Activated T-helper 2 cell treated with anti-CD3 and anti-CD28 coated beads, Interferon-gamma antibody, Interleukin-2, Interleukin-4, amounts not matched to agents 10 μg/mL and 5 μg/mL and 100 μg/mL, durations not matched to agents 14 hours and 24 hours and 36 hours (primary cell): ENCODE measurements at regions of chr6 and their contacts with region 1.

Region 1: GRCh38 chr6:28586962-28587745 is 61.5 kb downstream of the GPX5 start:
- DNase-seq: peak; percentile 38
- H3K4me3 Mint-ChIP-seq: peak overlapping the region; percentile 78
- H3K27ac Mint-ChIP-seq: no peak overlapping the region
- H3K4me1 Mint-ChIP-seq: peaks cover 27% of the 10 kb centered on the region
- H3K27me3 Mint-ChIP-seq: peaks cover 66% of the 10 kb centered on the region

Region 2: GRCh38 chr6:27495386-27496135 is 1091.6 kb before region 1 on chr6:
- intact Hi-C with region 1: loop called (anchors 5 kb)
- DNase-seq: peak; percentile 49
- H3K4me3 Mint-ChIP-seq: peak overlapping the region; percentile 83
- H3K27ac Mint-ChIP-seq: peak overlapping the region; percentile 36
- H3K4me1 Mint-ChIP-seq: peaks cover 10% of the 10 kb centered on the region
- H3K27me3 Mint-ChIP-seq: peaks cover 59% of the 10 kb centered on the region

Region 3: DNA sequence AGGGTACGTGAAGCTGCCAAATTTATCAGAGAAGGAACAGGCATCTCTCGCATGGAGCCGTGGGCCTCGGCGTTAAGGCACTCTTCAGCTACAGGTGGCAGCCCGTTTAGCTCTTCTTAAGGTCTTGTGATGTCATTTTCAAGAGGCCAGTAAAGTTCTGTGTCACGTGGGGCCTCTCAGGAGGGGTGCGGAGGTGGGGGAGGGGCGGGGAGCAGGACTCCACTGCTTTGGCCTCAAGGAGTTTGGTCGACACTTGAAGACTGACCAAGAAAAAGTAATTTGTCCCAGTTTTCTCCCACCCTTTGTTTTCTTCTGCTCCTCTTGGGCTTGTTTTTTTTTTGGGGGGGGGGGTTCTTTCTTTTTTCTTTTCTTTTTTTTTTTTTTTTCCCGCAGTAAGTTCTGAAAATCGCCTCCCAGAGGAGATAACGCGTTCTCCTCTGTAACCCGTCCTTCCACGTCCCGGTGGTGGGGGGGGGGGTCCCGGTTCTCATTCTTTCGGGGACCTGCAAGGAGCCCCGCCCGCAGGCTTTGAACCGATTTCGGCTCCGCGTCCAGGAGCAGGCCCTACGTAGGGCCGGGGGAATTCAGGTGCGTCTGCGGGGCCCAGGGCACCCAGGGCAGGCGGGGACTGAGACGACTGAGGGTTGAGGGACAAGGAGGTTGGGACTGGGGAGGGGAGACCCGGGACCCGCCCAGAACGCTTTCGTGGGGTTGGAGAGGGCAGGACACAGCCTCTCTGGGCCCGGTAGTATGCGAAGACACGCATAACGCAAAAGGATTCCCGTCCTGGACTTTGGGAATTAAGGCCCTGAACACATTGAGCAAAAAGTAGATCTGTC is 97.6 kb before region 1 on chr6:
- intact Hi-C with region 1: loop called (anchors 5 kb)
- DNase-seq: peak; percentile 17
- H3K4me3 Mint-ChIP-seq: peak overlapping the region; percentile 74
- H3K27ac Mint-ChIP-seq: peak overlapping the region; percentile 6
- H3K4me1 Mint-ChIP-seq: peaks cover 18% of the 10 kb centered on the region
- H3K27me3 Mint-ChIP-seq: peaks cover 49% of the 10 kb centered on the region

Region 4: GRCh38 chr6:28542440-28543296 is 44.5 kb before region 1 on chr6:
- intact Hi-C with region 1: loop called (anchors 5 kb)
- DNase-seq: peak; percentile 46
- H3K4me3 Mint-ChIP-seq: peak overlapping the region; percentile 72
- H3K27ac Mint-ChIP-seq: no peak overlapping the region
- H3K4me1 Mint-ChIP-seq: peaks cover 23% of the 10 kb centered on the region
- H3K27me3 Mint-ChIP-seq: peaks cover 71% of the 10 kb centered on the region

Region 5: GRCh38 chr6:28553986-28554881 is 32.9 kb before region 1 on chr6:
- intact Hi-C with region 1: no loop called
- DNase-seq: no peak
- H3K4me3 Mint-ChIP-seq: no peak overlapping the region
- H3K27ac Mint-ChIP-seq: no peak overlapping the region
- H3K4me1 Mint-ChIP-seq: peaks cover 6% of the 10 kb centered on the region
- H3K27me3 Mint-ChIP-seq: peaks cover 65% of the 10 kb centered on the region

Region 6: DNA sequence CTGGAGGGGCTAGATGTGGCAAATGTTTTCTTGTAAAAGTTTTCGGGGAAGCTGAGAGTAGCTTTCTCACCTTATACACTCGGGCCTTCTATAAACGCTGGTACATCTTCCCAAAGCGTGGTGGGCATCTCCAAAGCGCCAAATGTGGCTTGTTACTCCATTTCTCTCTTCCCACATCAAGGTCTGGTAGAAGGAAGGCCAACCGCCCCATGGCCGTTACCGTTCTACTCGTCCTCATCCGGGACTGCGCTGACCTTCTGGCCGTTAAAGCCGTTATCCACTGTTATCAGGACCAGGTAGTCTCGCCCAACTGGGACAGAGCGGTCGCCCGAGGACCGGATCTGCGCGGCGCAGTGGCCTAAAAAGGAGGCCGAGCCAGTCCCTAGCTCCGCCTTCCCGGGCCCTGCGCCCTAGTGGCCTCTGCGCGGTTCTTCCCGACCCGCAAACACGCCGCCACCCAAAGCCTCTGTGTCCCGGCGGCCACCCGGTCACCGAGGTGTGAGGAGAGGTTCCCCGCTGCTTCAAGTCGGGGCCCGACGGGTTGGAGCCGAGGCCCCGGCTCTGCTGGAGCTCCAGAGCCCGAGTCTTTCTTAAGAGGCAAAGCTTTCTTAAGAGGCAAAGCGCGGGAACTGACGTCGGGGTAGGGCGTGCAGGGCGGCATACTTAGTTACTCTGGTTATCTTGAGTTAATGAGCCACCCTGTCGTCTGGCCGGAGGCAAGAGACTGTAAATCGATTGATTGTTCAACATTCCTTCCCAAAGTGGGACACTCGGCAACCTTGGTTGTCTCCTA is 29.0 kb after region 1 on chr6:
- intact Hi-C with region 1: no loop called
- DNase-seq: no peak
- H3K4me3 Mint-ChIP-seq: no peak overlapping the region
- H3K27ac Mint-ChIP-seq: no peak overlapping the region
- H3K4me1 Mint-ChIP-seq: no peaks in the 10 kb centered on the region
- H3K27me3 Mint-ChIP-seq: peaks cover 45% of the 10 kb centered on the region

Region 7: DNA sequence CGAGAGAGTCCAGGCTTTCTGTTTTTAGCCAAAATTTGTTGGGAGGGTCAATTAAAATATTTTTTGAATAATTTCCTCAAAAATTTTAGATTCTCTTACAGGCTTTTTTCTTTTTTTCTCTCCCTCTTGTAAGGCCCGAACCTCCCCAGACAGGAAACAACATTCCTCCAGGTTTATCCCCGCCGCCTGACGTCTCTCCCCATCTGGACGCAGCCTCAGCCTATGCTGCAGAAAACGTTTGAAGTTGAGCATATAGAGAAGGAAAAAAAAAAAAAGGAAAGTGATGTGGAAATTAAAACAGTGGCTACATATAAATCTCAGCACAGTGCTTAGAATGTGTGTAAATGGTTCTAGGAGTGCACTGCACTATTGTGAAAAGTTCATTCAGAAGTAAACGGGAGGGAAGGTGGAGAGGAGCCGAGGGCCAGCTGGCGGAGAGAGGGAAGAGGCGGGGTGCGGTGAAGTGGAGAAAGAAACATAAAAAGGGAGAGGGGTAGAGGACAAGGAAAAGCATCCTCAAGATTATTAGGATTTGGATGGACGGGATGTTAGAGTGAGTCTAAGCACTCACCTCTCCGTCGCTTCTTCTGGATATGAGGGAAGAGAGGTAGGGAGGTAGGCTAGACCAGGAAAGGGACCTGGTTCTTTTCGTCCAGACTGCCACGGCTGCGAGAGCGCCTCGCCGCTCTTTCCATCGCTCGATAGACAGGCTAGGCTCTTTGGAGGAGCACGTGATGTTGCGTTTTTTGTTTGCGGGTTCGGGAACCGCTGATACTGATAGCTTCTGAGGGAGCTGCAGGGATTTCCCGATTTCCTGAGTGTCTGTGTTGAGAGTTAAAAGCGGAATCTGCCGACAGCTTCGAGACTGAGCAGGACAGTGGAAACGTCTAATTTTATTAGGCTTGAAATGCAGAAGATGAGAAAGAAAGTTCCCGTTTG is 237.9 kb after region 1 on chr6:
- intact Hi-C with region 1: no loop called
- DNase-seq: no peak
- H3K4me3 Mint-ChIP-seq: no peak overlapping the region
- H3K27ac Mint-ChIP-seq: no peak overlapping the region
- H3K4me1 Mint-ChIP-seq: peaks cover 3% of the 10 kb centered on the region
- H3K27me3 Mint-ChIP-seq: peaks cover 65% of the 10 kb centered on the region